Naive thymus-derived CD4-positive, alpha-beta T cell (primary cell): ENCODE measurements at regions of chr12 and their contacts with region 1.

Region 1: GRCh38 chr12:102769319-102769916 is 147.6 kb downstream of the PAH start:
- DNase-seq: peak in 2 of 9 donors; percentile 5 to 31
- ATAC-seq: no peak
- H3K4me3 ChIP-seq: no peak overlapping the region
- H3K4me3 Mint-ChIP-seq: no peak overlapping the region
- H3K27ac ChIP-seq: no peak overlapping the region
- H3K27ac Mint-ChIP-seq: no peak overlapping the region
- H3K4me1 ChIP-seq: no peaks in the 10 kb centered on the region
- H3K4me1 Mint-ChIP-seq: peaks cover 0 to 2% (median 0%) of the 10 kb centered on the region in 7 donors
- H3K27me3 ChIP-seq: no peaks in the 10 kb centered on the region
- H3K27me3 Mint-ChIP-seq: peaks cover 9 to 23% (median 15%) of the 10 kb centered on the region in 5 donors

Region 2: DNA sequence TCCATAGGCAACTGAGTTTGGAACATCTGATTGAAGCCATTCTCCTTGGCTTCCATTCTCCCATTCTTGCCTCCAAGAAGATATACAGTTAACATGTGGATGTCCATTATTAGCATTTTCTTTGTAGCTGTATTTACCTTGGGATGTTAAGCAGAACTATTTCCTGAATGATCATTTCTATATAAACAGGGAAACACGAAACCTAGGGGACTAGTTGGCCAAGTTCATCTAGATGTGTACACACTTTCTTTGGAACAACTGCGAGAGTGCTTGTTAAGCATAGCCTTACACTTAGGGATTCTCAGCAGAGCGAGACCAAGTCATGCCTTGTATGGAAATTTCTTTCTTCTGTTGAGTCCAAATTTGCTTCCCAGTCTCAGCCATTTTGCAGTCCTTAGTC is 850.0 kb before region 1 on chr12:
- CTCF ChIA-PET with region 1: no interaction called
- POLR2A ChIA-PET with region 1: no interaction called
- intact Hi-C with region 1: loop called in 1 of 2 experiments (anchors 5 kb)
- DNase-seq: no peak
- ATAC-seq: no peak
- H3K4me3 ChIP-seq: no peak overlapping the region
- H3K4me3 Mint-ChIP-seq: no peak overlapping the region
- H3K27ac ChIP-seq: no peak overlapping the region
- H3K27ac Mint-ChIP-seq: no peak overlapping the region
- H3K4me1 ChIP-seq: no peaks in the 10 kb centered on the region
- H3K4me1 Mint-ChIP-seq: peaks cover 0 to 13% (median 3%) of the 10 kb centered on the region in 7 donors
- H3K27me3 ChIP-seq: no peaks in the 10 kb centered on the region
- H3K27me3 Mint-ChIP-seq: peaks cover 0 to 5% (median 0%) of the 10 kb centered on the region in 5 donors

Region 3: DNA sequence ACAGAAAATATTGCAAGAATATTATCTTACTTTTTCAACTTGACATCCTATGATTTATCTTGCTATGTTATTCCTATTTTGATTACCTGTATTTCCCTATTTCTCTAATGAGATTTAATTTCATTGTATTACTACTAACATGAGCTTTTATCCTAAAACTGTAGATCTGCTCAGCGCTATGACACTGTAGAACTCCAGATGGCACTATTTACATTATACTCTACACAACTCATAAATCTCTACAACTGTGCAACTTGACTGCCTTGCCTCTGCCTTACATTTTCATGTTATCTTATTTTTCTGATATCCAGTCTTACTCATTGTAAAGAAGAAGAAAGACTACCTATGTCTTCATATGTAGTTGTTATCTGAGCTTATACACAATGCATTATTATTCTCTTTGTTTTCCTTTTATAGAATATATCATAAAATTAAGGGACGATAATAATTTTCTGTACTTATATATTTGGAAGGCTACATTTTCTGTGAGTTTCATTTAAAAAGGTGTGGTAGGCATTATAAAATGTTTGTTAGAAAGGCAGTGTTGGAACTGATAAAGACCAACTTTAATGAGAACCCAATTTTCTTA is 673.6 kb before region 1 on chr12:
- CTCF ChIA-PET with region 1: no interaction called
- POLR2A ChIA-PET with region 1: no interaction called
- intact Hi-C with region 1: loop called in 1 of 2 experiments (anchors 1 kb)
- DNase-seq: no peak
- ATAC-seq: peak; percentile 56
- H3K4me3 ChIP-seq: no peak overlapping the region
- H3K4me3 Mint-ChIP-seq: no peak overlapping the region
- H3K27ac ChIP-seq: no peak overlapping the region
- H3K27ac Mint-ChIP-seq: no peak overlapping the region
- H3K4me1 ChIP-seq: no peaks in the 10 kb centered on the region
- H3K4me1 Mint-ChIP-seq: peaks cover 0 to 5% (median 3%) of the 10 kb centered on the region in 7 donors
- H3K27me3 ChIP-seq: no peaks in the 10 kb centered on the region
- H3K27me3 Mint-ChIP-seq: no peaks in the 10 kb centered on the region

Region 4: GRCh38 chr12:102169922-102170621 is 599.3 kb before region 1 on chr12:
- CTCF ChIA-PET with region 1: no interaction called
- POLR2A ChIA-PET with region 1: no interaction called
- intact Hi-C with region 1: loop called in 1 of 2 experiments (anchors 1 kb)
- DNase-seq: peak in 2 of 9 donors; percentile 2 to 5
- ATAC-seq: peak; percentile 54
- H3K4me3 ChIP-seq: no peak overlapping the region
- H3K4me3 Mint-ChIP-seq: no peak overlapping the region
- H3K27ac ChIP-seq: no peak overlapping the region
- H3K27ac Mint-ChIP-seq: no peak overlapping the region
- H3K4me1 ChIP-seq: no peaks in the 10 kb centered on the region
- H3K4me1 Mint-ChIP-seq: peaks cover 0 to 17% (median 0%) of the 10 kb centered on the region in 7 donors
- H3K27me3 ChIP-seq: no peaks in the 10 kb centered on the region
- H3K27me3 Mint-ChIP-seq: no peaks in the 10 kb centered on the region

Region 5: DNA sequence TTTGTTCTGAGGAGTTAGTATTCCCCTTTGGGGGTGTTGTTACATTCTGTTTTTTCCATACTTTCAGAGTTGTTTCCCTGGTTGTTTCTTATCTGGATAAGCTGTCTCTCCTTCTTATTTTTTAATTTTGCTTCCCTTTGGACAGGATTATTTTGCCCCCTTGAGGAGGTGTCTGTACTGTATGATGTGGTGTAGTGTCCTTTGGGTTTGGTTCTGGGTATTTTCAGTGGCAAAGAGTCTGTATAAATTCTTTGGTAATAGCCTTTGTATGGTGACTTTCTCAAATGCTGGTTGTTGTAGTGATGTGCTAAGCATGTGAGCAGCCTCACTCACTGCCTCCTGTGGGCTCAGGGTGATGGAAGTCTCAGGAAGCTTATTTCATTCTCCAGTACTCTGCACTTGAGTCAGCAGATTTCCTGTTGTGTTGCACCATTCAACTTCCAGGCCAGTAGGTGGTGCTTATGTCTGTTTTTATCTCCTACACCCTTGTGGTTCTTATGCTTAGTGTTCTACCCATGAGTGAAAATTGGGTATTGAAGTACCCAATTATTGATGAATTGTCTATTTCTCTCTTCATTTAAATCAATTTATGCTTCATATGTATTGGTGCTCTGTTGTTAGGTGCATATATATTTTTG is 468.5 kb before region 1 on chr12:
- CTCF ChIA-PET with region 1: no interaction called
- POLR2A ChIA-PET with region 1: no interaction called
- intact Hi-C with region 1: loop called in 1 of 2 experiments (anchors 2 kb)
- DNase-seq: peak in 1 of 9 donors; percentile 24
- ATAC-seq: peak; percentile 27
- H3K4me3 ChIP-seq: no peak overlapping the region
- H3K4me3 Mint-ChIP-seq: no peak overlapping the region
- H3K27ac ChIP-seq: no peak overlapping the region
- H3K27ac Mint-ChIP-seq: no peak overlapping the region
- H3K4me1 ChIP-seq: no peaks in the 10 kb centered on the region
- H3K4me1 Mint-ChIP-seq: peaks cover 0 to 14% (median 0%) of the 10 kb centered on the region in 7 donors
- H3K27me3 ChIP-seq: no peaks in the 10 kb centered on the region
- H3K27me3 Mint-ChIP-seq: peaks cover 0 to 30% (median 4%) of the 10 kb centered on the region in 5 donors

Region 6: DNA sequence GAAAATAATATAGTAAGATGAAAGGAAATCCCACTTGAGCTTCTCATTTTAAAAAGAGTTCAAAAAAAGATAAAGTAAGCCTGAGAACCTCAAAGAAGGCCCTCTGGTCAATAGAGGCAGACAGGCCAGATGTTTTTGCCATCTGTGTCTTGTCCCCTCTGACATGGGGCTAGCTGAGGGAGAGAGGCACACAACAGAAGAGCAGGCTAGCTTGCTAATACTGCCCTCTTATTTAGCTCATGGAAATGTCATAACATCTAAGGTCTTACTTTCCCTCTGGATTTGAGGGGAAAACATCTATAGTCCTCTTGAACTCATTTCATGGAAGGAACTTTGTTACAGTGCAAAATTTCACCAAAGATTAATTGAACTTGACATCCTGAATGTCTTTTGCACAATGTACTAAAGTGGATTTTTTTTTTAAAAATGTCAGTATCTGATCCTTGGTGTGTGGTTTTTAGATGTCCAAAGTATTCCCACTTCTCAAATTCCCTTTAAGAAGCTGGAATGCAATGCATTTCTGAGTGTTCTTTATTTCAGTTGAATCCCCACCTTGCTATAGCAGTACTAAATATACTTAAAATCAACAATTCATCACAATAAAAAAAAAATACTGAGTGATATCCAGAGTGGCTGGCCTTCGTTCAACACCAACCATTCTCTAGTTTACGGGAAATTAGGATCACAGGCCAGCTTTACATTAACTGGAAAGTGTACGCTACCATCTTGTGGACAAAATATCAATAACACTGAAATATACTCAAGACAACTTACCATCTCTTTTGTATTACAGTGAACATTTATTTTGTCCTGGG is 29.1 kb before region 1 on chr12:
- CTCF ChIA-PET with region 1: no interaction called
- POLR2A ChIA-PET with region 1: no interaction called
- intact Hi-C with region 1: no loop called
- DNase-seq: no peak
- ATAC-seq: no peak
- H3K4me3 ChIP-seq: no peak overlapping the region
- H3K4me3 Mint-ChIP-seq: no peak overlapping the region
- H3K27ac ChIP-seq: no peak overlapping the region
- H3K27ac Mint-ChIP-seq: no peak overlapping the region
- H3K4me1 ChIP-seq: no peaks in the 10 kb centered on the region
- H3K4me1 Mint-ChIP-seq: peaks cover 0 to 3% (median 0%) of the 10 kb centered on the region in 7 donors
- H3K27me3 ChIP-seq: no peaks in the 10 kb centered on the region
- H3K27me3 Mint-ChIP-seq: no peaks in the 10 kb centered on the region